Activated CD4-positive, alpha-beta T cell treated with anti-CD3 and anti-CD28 coated beads, Interleukin-2, amount 10 ng/mL, durations not matched to agents 24 days and 14 days (primary cell): ENCODE measurements at regions of chr20 and their contacts with region 1.

Region 1: GRCh38 chr20:3470627-3471396 is at the start of gene ATRN:
- DNase-seq: peak; percentile 97
- H3K4me3 Mint-ChIP-seq: peak within 1 kb of the TSS; percentile 95
- H3K27ac Mint-ChIP-seq: peak within 1 kb of the TSS; percentile 79
- H3K4me1 Mint-ChIP-seq: peaks cover 26% of the 10 kb centered on the region
- H3K27me3 Mint-ChIP-seq: peaks cover 15% of the 10 kb centered on the region
- total RNA-seq, gene ATRN: 11.8 and 12.1 TPM in 2 replicates

Region 2: DNA sequence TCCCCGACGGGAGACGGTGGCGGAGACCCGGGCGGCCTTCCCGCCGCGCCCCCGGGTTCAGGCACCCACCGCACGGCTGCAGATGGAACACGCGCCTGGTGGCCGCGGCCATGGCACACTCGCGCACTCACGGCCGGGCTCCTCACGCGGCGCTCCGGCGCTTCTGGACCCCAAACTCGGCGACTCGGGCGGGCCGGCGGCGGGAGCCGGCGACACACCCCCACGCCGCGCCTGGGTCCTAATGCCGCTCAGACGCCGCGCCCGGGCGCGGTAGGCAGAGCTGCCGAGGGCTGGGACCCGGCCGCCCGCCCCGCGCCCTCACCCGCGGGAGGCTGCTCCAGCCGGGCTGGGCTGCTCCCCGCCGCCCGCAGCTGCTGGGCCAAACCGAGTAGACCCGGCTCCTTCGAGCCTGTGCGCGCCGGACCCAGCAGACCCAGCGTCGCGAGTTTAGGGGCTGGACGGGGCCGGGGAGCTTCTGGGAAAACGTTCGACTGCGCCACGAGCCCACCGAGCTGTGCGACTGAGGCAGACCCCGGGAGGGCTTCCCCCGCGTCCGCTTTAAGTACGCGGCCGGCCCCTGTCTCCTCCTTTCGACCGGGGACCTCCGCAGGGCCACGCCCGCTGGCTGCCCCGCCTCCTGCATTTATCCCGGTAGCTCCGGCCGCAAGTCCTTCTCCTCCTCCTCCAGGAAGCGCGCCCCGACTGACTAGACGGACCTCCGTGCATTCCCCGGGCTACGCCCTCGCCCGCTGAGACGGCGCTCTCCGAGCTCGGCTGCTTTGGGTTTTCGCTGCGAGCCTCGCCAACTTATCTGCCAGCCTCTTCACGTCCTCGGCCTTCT is 231.6 kb before region 1 on chr20 and contains the start of gene SLC4A11:
- intact Hi-C with region 1: loop called (anchors 5 kb)
- DNase-seq: peak; percentile 84
- H3K4me3 Mint-ChIP-seq: peak within 1 kb of the TSS; percentile 91
- H3K27ac Mint-ChIP-seq: no peak within 1 kb of the TSS
- H3K4me1 Mint-ChIP-seq: peaks cover 8% of the 10 kb centered on the region
- H3K27me3 Mint-ChIP-seq: peaks cover 52% of the 10 kb centered on the region
- total RNA-seq, gene SLC4A11: 1.9 and 2.4 TPM in 2 replicates

Region 3: DNA sequence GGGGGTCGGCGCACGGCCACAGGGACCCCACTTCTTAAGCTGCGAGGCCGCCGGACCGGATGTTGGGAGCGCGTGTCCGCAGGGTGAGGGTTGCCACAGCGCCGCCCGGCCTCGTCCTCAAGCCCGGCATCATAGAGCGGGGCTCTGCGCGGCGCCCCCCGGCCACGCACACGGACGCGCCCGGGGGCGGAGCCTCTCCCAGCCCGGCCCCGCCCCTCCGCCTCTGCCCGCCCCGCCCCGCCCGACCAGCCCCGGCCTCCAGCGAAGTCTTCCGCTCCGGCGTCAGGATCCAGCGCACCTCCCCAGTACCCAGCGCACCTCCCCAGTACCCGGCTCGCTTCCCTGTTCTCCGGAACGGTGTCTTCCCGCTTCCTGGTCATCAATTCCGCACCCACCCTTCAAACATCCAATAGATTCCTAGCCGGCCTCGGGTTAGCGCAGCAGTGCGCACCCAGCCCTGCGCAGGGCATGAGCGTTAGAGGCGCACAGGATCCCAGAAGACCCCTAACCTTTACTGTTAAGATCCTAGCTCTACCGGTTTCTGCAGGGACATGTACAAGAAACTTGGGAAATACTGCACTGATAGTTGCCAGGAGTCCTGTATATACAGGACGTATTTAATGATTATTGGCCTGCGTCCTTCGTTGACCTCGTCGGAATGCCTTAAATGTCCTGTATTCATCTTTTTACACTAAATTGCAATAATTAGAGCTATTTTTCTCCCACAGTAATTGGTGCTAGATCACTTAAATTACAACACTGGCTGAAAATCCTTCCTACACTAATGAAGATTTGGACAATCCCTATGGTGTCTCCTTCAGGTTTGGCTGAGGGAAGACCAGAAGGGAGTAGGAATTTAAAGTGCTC is 62.8 kb before region 1 on chr20:
- intact Hi-C with region 1: loop called (anchors 2 kb)
- DNase-seq: peak; percentile 91
- H3K4me3 Mint-ChIP-seq: peak overlapping the region; percentile 91
- H3K27ac Mint-ChIP-seq: peak overlapping the region; percentile 90
- H3K4me1 Mint-ChIP-seq: peaks cover 30% of the 10 kb centered on the region
- H3K27me3 Mint-ChIP-seq: peaks cover 41% of the 10 kb centered on the region

Region 4: DNA sequence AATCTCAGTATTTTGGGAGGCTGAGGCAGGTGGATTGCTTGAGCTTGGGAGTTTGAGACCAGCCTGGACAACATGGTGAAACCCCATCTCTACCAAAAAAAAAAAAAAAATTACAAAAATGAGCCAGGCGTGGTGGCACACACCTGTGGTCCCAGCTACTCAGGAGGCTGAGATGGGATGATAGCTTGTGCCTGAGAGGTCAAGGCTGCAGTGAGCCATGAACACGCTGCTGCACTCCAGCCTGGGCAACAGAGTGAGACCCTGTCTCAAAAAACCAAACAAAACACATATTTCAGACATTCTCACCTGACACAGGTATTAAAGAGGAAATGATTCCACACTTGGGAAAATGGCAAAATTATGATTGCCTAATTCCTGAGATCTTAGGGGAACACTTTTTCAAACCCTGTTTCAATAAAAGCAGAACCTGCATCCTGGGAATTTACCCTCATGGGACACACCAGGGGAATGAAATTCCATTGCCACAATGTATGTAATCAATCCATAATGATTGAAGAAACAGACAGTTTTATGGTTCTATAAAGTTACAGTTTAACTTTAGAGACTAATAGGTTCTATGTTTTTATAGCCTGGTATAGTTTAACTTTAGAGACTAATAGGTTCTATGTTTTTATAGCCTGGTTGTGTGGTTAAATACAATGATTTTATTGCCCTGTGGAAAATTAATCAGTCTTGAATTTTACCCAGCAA is 33.8 kb before region 1 on chr20:
- intact Hi-C with region 1: no loop called
- DNase-seq: no peak
- H3K4me3 Mint-ChIP-seq: no peak overlapping the region
- H3K27ac Mint-ChIP-seq: no peak overlapping the region
- H3K4me1 Mint-ChIP-seq: no peaks in the 10 kb centered on the region
- H3K27me3 Mint-ChIP-seq: peaks cover 13% of the 10 kb centered on the region